Body of pancreas (tissue), 4 donors: ENCODE measurements at regions of chr2 and their contacts with region 1.

Region 1: GRCh38 chr2:38560092-38560491 is 42.6 kb downstream of the HNRNPLL start:
- DNase-seq: no peak
- ATAC-seq: no peak
- H3K4me3 ChIP-seq: no peak overlapping the region
- H3K27ac ChIP-seq: no peak overlapping the region
- H3K4me1 ChIP-seq: no peaks in the 10 kb centered on the region
- H3K27me3 ChIP-seq: no peaks in the 10 kb centered on the region
- CTCF ChIP-seq: no peak
- POLR2A ChIP-seq: no peak

Region 2: DNA sequence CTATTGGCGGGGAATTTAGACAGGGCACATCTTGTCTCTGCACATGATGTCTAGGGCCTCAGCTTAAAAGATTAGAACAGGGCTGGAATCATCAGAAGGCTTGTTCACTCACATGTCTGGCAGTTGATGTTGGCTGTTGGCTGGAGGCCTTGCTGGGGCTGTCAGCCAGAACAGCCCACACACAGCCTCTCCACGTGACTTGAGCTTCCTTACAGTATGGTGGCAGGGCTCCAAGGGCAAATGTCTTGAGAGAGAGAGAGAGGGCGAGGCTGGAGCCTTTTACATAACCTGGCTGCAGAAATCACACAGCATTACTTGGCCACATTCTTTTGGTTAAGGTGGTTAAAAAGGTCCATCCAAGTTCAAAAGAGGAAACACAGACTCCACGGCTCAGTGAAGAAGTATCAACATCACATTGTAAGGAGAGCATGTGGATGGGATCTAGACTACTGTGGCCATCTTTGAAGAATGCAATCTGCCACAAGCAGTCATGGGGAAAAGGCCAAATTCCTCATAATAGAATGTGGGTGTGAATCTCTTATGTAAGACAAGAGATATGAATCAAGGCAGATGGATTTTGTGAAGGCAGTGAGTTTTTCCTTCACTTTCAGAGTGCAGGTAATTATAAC is 160.6 kb after region 1 on chr2:
- intact Hi-C with region 1: no loop called
- DNase-seq: peak; percentile 66 to 82 (median 78)
- ATAC-seq: peak; percentile 85
- H3K4me3 ChIP-seq: no peak overlapping the region
- H3K27ac ChIP-seq: peak overlapping the region in 1 of 4 donors; percentile 31
- H3K4me1 ChIP-seq: peaks cover 40% of the 10 kb centered on the region
- H3K27me3 ChIP-seq: no peaks in the 10 kb centered on the region
- CTCF ChIP-seq: no peak
- POLR2A ChIP-seq: no peak

Region 3: DNA sequence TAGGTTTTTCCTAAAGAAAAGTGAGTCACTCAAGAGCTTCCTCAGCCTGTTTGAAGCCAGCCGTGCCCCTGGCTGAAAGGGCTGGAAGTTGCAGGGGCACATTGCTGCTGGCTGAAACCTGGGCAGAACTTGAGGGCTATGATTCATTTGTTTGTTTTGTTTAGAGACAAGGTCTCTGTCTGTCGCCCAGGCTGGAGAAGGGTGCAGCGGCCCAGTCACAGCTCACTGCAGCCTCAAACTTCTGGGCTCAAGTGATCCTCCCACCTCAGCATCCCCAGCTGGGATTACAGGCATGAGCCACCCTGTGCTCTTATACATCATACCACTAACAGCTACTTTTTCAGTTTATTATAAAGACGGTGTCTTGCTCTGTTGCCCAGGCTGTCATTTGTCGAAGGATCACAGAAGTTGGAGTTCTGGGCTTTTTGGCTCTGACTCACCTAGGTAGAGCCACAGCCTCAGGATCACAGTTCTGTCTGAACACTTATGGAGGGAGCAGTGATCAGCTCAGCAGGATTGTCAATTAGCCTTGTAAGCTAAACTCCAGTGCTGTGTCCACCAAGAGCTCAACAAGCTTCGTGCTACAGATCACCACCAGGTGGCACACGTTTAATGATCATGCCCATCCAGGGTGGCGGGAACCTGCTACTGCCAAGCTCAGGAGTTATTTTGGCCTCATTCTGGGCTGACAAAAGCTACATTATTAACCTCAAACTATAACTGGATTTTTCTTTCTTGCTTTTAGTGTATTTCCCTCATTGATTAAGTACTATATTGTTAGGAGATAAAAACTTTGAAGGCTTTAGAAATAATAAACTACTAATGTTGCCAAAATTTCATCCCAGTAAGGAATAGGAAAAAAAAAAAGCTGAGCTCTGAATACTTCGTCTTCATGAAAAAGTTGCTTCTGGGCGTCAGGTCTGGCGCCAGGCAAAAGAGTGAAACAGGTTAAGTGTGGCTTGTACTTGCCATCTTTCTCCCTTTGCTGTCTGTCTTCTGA is 387.4 kb after region 1 on chr2:
- intact Hi-C with region 1: loop called (anchors 10 kb)
- DNase-seq: peak; percentile 74 to 83 (median 80)
- ATAC-seq: peak; percentile 79
- H3K4me3 ChIP-seq: no peak overlapping the region
- H3K27ac ChIP-seq: no peak overlapping the region
- H3K4me1 ChIP-seq: no peaks in the 10 kb centered on the region
- H3K27me3 ChIP-seq: no peaks in the 10 kb centered on the region
- CTCF ChIP-seq: peak; percentile 36 to 66 (median 65)
- POLR2A ChIP-seq: no peak